ENCODE measurements at regions of chr5 and their contacts with region 1.

Region 1: DNA sequence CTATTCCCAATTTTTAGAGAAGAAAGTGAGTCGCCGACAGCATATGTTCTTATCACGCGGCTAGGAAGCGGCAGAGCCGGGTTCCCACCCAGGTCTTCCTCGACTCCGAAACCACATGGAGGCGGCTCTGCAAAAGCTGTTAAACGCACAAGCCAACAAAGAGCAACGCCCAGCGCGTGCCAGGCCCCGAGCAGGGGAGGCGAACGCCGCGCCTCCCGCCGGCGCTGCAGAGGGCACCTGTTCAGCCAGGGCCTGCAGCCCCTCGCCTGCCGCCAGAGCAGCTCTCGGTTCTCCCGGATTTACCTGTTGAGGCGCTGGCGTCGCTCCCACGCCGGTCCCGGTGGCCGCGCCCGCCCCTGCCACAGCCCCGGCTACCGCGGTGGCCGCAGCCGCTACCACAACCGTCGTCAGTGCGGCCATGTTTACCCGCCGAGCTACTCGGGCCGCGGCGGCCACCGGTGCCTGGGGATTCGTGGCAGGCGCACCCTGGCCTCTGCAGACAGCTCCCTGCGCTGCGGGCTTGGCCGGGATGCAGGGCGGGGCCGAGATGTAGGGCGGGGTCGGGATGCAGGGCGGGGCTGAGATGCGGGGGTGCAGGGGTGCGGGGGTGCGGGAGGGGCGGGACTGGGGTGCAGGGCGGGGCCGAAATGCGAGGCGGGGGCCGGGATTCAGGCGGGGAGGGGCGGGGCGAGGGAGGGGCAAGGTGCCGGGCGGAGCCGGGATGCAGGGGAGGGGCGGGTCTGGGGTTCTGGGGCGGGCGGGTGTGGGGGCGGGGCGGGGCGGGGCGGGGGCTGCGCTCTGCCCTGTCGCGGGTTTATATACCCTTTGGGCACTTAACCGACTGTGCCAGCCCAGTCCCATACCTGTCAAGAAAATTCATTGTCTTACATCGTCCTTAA is at the start of gene CCDC112:
- DNase-seq: peak; percentile 89
- ATAC-seq: peak; percentile 93
- total RNA-seq, gene CCDC112: 4.4 TPM

Region 2: DNA sequence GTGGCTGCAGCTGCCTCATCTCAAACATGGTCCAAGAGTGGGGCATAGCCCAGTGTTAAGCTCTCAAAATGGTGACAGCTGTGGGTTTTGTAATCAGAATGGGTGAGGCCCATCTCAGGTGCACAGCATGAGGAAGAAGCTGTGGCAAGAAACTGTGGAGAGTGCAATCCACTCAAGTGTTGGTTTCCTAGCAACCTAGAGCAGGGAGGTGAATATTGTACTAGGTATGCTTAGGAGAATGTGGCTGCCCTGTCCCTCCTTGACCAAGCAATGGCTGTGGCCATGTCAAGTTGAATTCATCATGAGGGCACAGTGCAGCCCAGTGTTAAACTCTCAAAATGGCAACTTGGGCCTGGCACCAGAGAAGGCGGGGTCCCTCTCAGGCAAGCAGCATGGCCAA is 1095.0 kb before region 1 on chr5:
- intact Hi-C with region 1: no loop called
- DNase-seq: no peak
- ATAC-seq: no peak

Region 3: DNA sequence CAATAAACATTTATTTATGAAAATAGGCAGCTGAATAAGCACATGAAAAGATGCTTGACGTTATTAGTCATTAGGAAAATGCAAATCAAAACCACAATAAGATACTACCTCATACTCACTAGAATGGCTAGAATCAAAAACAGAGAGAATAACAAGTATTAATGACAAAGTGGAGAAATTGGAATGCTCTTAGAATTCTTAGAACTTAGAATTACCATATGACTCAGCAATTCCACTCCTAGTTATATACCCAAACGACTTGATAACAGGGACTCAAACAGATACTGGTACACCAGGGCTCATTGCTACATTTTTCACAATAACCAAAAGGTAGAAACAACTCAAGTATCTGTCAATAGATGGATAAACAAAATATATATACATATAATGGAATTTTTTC is 111.6 kb before region 1 on chr5:
- intact Hi-C with region 1: no loop called
- DNase-seq: no peak
- ATAC-seq: no peak

Region 4: GRCh38 chr5:115514220-115514619 is 217.8 kb after region 1 on chr5:
- intact Hi-C with region 1: no loop called
- DNase-seq: no peak
- ATAC-seq: no peak

Region 5: GRCh38 chr5:115831163-115831768 is 534.9 kb after region 1 on chr5:
- intact Hi-C with region 1: loop called (anchors 10 kb)
- DNase-seq: no peak
- ATAC-seq: peak; percentile 53